ENCODE measurements at regions of chr17 and their contacts with region 1.

Region 1: DNA sequence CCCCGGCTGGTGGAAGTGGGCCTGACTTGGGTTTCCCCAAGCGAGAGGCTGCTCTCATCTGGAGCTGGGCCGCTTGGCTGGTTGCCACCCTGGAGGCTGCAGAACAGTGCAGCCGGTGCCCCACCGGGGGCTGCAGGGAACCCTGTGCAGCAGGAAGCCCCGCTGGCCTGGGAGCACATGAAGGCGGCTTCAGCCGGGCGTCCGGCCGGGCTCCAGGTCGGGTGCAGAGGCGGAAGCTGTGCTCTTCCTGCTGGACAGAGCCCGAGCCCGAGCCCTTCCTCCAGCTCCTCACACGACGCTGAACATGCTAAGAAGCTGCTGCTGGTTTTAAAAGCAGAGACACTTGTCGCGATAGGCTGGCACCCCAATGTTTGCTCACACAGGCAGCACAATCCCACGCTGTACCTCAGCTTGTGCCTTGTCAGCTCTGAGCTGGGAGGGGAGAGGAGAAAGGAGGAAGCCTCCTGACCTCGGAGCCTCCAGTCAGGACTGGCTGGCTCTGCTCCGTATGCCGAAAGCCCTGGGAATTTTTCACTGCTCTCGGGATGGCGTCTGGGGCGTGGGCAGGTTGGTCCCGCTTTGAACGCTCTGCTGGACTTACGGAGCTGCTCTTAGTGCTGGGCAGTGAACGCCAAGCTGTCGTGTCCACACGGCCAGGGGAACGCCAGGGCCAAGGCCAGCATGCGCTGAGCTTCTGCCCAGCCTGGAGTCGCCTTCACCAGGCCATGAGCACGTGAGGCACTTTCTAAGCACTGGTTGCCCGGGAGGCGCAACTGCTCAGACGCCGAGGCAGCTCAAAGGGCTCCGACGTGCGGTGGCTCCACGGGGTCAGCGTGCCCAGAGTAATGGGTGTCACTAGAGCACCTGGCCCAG is 8.8 kb downstream of the CDK5R1 start:
- DNase-seq: peak; percentile 47 to 53
- ATAC-seq: peak; percentile 48 to 86 (median 72)
- H3K4me3 ChIP-seq: peak overlapping the region in 3 of 10 donors; percentile 0 to 24 (median 13)
- H3K27ac ChIP-seq: peak overlapping the region in 8 of 10 donors; percentile 19 to 77 (median 55)
- H3K4me1 ChIP-seq: peaks cover 4 to 51% (median 24%) of the 10 kb centered on the region in 9 donors
- H3K27me3 ChIP-seq: no peaks in the 10 kb centered on the region
- CTCF ChIP-seq: no peak

Region 2: GRCh38 chr17:32519228-32520103 is 23.9 kb after region 1 on chr17:
- intact Hi-C with region 1: loop called in 1 of 10 experiments (anchors 2 kb)
- DNase-seq: peak; percentile 41 to 62
- ATAC-seq: peak; percentile 59 to 82 (median 72)
- H3K4me3 ChIP-seq: peak overlapping the region in 9 of 10 donors; percentile 40 to 65 (median 55)
- H3K27ac ChIP-seq: peak overlapping the region in 6 of 10 donors; percentile 5 to 59 (median 35)
- H3K4me1 ChIP-seq: peaks cover 8 to 47% (median 24%) of the 10 kb centered on the region in 9 donors
- H3K27me3 ChIP-seq: peaks cover 0 to 31% (median 0%) of the 10 kb centered on the region in 7 donors
- CTCF ChIP-seq: no peak

Region 3: DNA sequence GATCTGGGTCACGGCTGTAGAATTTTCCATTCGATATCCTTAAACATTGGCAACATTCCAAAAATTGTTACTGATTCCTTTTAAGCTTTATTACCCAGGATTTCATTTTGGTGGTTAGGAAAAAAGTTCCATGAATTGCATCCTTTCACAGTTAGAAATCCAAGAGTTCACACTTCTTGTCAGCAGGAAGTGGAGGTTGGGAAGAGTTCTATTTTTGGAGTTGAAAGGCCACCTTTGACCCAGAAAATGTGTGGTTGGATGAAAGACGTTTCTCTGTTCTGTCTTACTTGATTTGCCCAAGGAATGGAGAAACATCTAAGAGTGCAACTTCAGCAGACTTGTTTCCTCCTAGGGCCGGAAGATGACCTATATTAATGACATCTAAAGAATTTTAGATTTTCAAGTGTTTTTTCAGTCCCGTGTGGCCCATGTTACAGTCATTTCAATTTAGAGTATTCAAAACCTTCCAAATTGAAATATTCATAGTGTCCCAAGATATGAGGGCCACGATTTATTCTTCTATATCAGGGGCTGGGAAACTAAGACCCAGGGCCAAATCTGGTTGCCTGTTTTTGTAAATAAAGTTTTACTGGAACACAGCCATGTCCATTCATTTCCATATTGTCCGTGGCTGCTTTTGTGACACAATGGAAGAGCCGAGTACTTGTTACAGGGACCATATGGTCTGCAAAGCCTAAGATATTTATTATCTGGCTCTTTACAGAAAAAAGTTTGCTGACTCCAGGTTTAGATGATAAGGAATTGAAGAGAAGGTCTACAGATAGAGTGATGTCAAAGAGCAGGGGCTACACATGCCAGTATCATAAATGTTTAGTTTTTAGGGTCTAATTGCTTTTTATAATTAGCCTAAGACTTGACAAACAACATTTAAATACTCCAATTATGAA is 41.4 kb after region 1 on chr17:
- intact Hi-C with region 1: loop called in 1 of 10 experiments (anchors 5 kb)
- DNase-seq: no peak
- ATAC-seq: peak in 1 of 8 donors; percentile 47
- H3K4me3 ChIP-seq: no peak overlapping the region
- H3K27ac ChIP-seq: peak overlapping the region in 2 of 10 donors; percentile 4 to 22
- H3K4me1 ChIP-seq: peaks cover 0 to 13% (median 10%) of the 10 kb centered on the region in 9 donors
- H3K27me3 ChIP-seq: no peaks in the 10 kb centered on the region
- CTCF ChIP-seq: no peak

Region 4: GRCh38 chr17:32609085-32609484 is 113.5 kb after region 1 on chr17:
- intact Hi-C with region 1: loop called in 3 of 10 experiments (anchors 10 kb)
- DNase-seq: peak; percentile 34 to 57
- ATAC-seq: peak; percentile 34 to 86 (median 66)
- H3K4me3 ChIP-seq: no peak overlapping the region
- H3K27ac ChIP-seq: no peak overlapping the region
- H3K4me1 ChIP-seq: peaks cover 0 to 5% (median 0%) of the 10 kb centered on the region in 9 donors
- H3K27me3 ChIP-seq: no peaks in the 10 kb centered on the region
- CTCF ChIP-seq: peak in 7 of 9 donors; percentile 21 to 56 (median 51)

Region 5: DNA sequence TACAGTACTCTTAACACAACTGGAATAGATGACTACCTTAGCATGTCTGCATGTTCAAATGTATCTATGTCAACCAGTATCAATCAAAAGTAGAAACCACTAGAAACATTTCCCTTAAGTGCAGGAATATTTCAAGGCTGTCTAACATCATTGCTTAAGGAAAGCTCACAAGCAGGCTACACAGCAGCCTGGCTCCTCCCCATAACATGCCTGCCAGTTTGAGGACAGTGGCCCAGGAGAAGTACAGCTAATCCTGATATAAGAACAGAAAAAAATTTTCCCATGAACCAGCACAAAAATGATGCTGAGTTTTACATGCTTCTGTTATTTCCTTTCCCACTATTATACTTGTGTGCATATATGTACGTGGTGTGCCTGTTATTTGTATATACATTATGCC is 206.3 kb after region 1 on chr17:
- intact Hi-C with region 1: no loop called
- DNase-seq: no peak
- ATAC-seq: no peak
- H3K4me3 ChIP-seq: no peak overlapping the region
- H3K27ac ChIP-seq: no peak overlapping the region
- H3K4me1 ChIP-seq: no peaks in the 10 kb centered on the region
- H3K27me3 ChIP-seq: no peaks in the 10 kb centered on the region
- CTCF ChIP-seq: no peak

Measured in heart right ventricle (tissue), 16 donors.